SK-N-SH (cell line): ENCODE measurements at regions of chr11 and their contacts with region 1.

Region 1: GRCh38 chr11:49995565-49995964 is 13.2 kb upstream of the OR4C12 start:
- DNase-seq: peak; percentile 18
- H3K4me3 ChIP-seq: no peak overlapping the region
- H3K27ac ChIP-seq: no peak overlapping the region
- H3K4me1 ChIP-seq: no peaks in the 10 kb centered on the region
- H3K27me3 ChIP-seq: no peaks in the 10 kb centered on the region
- CTCF ChIP-seq: peak; percentile 70
- EP300 ChIP-seq: no peak
- RAD21 ChIP-seq: peak; percentile 74

Region 2: DNA sequence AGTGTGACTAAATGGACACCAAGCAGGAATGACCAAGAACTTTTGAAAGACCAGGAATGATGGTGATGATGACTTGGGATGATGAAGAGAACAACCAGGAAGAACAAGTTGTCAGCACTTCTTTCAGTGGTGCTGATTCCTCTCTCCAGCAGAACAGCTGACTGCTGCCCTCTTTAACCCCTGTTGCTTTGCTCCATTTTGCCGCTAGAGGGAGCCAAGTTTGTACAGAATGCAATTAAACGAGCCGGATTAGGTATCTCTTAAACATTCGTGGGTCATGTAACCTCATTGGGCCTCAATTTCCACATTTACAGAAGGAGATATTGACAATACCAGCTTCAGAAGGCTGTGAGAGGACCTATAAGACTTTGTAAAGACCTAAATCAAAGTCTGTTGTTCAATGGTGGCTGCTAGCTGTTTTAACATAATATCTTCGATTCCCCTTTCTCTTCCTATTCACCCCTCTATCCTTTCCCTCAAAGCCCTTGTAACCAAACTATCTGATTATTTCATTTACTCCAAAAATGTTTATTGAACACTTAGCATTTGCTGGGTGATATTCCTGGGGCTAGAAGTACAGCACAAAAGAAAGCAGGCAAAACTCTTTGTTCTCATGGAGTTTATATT is 1687.7 kb before region 1 on chr11:
- CTCF ChIA-PET with region 1: interaction called, 17 read pairs
- POLR2A ChIA-PET with region 1: no interaction called
- DNase-seq: peak; percentile 45
- H3K4me3 ChIP-seq: no peak overlapping the region
- H3K27ac ChIP-seq: no peak overlapping the region
- H3K4me1 ChIP-seq: no peaks in the 10 kb centered on the region
- H3K27me3 ChIP-seq: no peaks in the 10 kb centered on the region
- CTCF ChIP-seq: peak; percentile 97
- EP300 ChIP-seq: no peak
- RAD21 ChIP-seq: peak; percentile 82